Esophagus muscularis mucosa (tissue), 4 donors: ENCODE measurements at regions of chr6 and their contacts with region 1.

Region 1: DNA sequence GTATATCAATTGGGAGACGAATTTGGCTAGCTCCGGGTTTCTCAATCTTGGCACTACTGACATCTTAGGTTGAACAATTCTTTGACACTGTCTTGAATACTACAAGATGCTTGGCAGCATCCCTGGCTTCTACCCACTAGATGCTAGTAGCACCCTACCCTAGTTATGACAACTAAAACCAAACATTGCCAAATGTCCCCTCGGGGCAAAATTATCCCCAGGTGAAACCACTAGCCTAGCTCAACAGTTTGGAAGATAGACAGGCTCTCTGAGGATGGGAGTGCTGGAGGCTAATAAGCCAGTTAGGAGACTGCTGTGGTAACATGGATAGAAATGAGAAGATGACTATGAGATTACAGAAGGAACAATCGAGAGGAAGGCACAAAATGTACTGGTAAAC is 20.9 kb downstream of the CCNC start:
- DNase-seq: no peak
- H3K4me3 ChIP-seq: no peak overlapping the region
- H3K27ac ChIP-seq: no peak overlapping the region
- H3K4me1 ChIP-seq: no peaks in the 10 kb centered on the region
- H3K27me3 ChIP-seq: no peaks in the 10 kb centered on the region
- CTCF ChIP-seq: no peak
- EP300 ChIP-seq: no peak
- POLR2A ChIP-seq: no peak

Region 2: GRCh38 chr6:99563056-99563723 is 15.7 kb after region 1 on chr6:
- intact Hi-C with region 1: loop called (anchors 1 kb)
- DNase-seq: no peak
- H3K4me3 ChIP-seq: no peak overlapping the region
- H3K27ac ChIP-seq: no peak overlapping the region
- H3K4me1 ChIP-seq: peaks cover 14 to 29% (median 21%) of the 10 kb centered on the region in 4 donors
- H3K27me3 ChIP-seq: no peaks in the 10 kb centered on the region
- CTCF ChIP-seq: no peak
- EP300 ChIP-seq: no peak
- POLR2A ChIP-seq: no peak

Region 3: DNA sequence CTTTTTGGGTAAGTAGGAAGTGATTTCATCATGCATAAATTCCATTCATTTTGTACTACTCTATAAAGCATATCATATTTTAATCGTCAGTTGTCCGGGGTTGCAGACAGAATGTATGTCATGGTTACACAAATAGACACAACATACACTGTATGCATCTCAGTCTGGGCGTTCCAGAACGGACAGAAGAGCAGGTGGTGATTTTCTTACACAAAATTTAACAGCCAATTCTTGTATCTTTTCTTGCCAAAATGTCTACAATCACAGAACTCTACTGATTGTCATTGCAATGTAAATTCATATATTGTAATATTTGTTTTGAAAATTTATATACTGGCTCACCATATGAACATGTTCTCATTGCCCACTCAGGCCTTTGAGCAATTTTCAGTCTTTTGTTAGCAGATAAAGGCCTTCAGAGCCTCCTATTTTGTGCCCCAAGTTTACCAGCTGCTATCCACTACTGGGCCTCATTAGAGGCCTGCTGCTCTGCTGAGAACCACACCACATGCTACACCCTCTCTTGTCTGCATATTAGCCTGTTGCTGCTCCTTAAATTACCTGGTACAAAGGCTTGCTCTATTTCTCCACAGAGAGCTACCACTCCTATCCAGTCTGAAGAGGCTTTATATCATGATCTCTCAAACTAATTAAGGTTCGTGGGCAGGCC is 120.6 kb after region 1 on chr6:
- intact Hi-C with region 1: no loop called
- DNase-seq: no peak
- H3K4me3 ChIP-seq: no peak overlapping the region
- H3K27ac ChIP-seq: no peak overlapping the region
- H3K4me1 ChIP-seq: no peaks in the 10 kb centered on the region
- H3K27me3 ChIP-seq: no peaks in the 10 kb centered on the region
- CTCF ChIP-seq: no peak
- EP300 ChIP-seq: no peak
- POLR2A ChIP-seq: no peak